Esophagus squamous epithelium (tissue), 5 donors: ENCODE measurements at regions of chr15 and their contacts with region 1.

Region 1: GRCh38 chr15:98647774-98648653 is at the start of gene IGF1R:
- DNase-seq: peak; percentile 25
- H3K4me3 ChIP-seq: peak within 1 kb of the TSS; percentile 69 to 93 (median 82)
- H3K27ac ChIP-seq: peak within 1 kb of the TSS; percentile 91 to 98 (median 96)
- H3K4me1 ChIP-seq: peaks cover 0 to 47% (median 10%) of the 10 kb centered on the region in 3 donors
- H3K27me3 ChIP-seq: peaks cover 0 to 33% (median 0%) of the 10 kb centered on the region in 4 donors
- CTCF ChIP-seq: peak in 1 of 6 experiments; percentile 14
- POLR2A ChIP-seq: peak in 2 of 4 donors; percentile 53 to 58
- total RNA-seq, gene IGF1R: 20.5 to 54.8 (median 40.4) TPM

Region 2: GRCh38 chr15:98523912-98524662 is 123.9 kb before region 1 on chr15:
- intact Hi-C with region 1: loop called (anchors 5 kb)
- DNase-seq: no peak
- H3K4me3 ChIP-seq: no peak overlapping the region
- H3K27ac ChIP-seq: no peak overlapping the region
- H3K4me1 ChIP-seq: peaks cover 0 to 4% (median 0%) of the 10 kb centered on the region in 3 donors
- H3K27me3 ChIP-seq: no peaks in the 10 kb centered on the region
- CTCF ChIP-seq: no peak
- POLR2A ChIP-seq: no peak

Region 3: GRCh38 chr15:99068186-99068585 is 420.2 kb after region 1 on chr15:
- intact Hi-C with region 1: loop called (anchors 10 kb)
- DNase-seq: no peak
- H3K4me3 ChIP-seq: no peak overlapping the region
- H3K27ac ChIP-seq: no peak overlapping the region
- H3K4me1 ChIP-seq: no peaks in the 10 kb centered on the region
- H3K27me3 ChIP-seq: no peaks in the 10 kb centered on the region
- CTCF ChIP-seq: no peak
- POLR2A ChIP-seq: no peak